GM13976 (cell line): ENCODE measurements at regions of chr20 and their contacts with region 1.

Region 1: GRCh38 chr20:46220455-46221204 is 87.7 kb downstream of the CDH22 start:
- DNase-seq: no peak
- CTCF ChIP-seq: no peak

Region 2: DNA sequence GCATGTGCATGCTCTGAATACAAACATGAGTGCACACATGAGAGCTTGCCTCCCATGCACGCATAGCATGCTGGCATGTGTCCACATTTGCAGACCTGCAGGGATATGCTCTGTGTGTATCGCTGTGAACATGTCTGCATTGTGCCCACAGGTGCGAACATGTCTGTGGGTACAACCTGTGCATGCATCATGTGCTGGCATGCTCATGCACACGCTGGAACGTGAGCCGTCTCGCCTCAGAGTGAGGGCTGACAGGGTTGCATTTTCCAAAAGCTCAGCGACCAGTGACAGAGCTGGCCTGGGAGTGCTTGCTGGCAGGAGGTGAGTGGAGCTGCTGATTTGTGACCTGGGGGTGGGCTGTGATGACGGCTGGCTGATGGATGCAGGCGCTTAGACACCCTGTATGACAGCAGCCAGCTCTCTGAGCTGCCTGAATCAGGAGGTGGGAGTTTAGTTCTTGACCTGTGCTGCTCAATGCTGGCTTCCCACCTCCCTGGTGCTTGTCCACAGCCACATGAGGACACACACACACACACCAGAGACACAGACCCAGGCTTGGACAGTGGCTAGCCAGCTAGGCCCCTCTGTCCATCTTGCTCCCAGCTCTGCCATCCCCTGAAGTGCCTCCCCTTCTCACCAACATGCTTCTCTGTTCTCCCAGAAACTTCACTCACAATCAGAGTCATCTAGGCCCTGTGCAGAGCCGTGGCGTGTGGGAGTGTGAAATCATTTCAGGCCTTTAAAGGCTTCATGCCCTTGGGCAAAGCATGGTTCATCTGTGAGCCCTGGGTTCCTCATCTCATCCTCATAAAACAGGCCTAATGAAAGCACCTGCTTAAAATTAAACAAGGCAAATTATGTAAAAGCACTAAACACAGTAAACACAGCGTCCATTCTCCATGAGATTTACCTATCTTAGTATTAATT is 51.1 kb before region 1 on chr20:
- in situ Hi-C with region 1: loop called (anchors 10 kb)
- DNase-seq: no peak
- CTCF ChIP-seq: no peak

Region 3: GRCh38 chr20:46363800-46364634 is 143.4 kb after region 1 on chr20:
- in situ Hi-C with region 1: no loop called
- DNase-seq: peak; percentile 95
- CTCF ChIP-seq: no peak